Sigmoid colon (tissue), 7 donors: ENCODE measurements at regions of chr3 and their contacts with region 1.

Region 1: GRCh38 chr3:42839616-42840015 is 30.4 kb downstream of the ACKR2 start:
- DNase-seq: peak; percentile 73
- H3K4me3 ChIP-seq: peak overlapping the region in 1 of 4 donors; percentile 19
- H3K27ac ChIP-seq: no peak overlapping the region
- H3K4me1 ChIP-seq: peaks cover 0 to 14% (median 8%) of the 10 kb centered on the region in 4 donors
- H3K27me3 ChIP-seq: no peaks in the 10 kb centered on the region
- CTCF ChIP-seq: peak; percentile 81 to 93 (median 93)
- EP300 ChIP-seq: no peak
- POLR2A ChIP-seq: no peak

Region 2: DNA sequence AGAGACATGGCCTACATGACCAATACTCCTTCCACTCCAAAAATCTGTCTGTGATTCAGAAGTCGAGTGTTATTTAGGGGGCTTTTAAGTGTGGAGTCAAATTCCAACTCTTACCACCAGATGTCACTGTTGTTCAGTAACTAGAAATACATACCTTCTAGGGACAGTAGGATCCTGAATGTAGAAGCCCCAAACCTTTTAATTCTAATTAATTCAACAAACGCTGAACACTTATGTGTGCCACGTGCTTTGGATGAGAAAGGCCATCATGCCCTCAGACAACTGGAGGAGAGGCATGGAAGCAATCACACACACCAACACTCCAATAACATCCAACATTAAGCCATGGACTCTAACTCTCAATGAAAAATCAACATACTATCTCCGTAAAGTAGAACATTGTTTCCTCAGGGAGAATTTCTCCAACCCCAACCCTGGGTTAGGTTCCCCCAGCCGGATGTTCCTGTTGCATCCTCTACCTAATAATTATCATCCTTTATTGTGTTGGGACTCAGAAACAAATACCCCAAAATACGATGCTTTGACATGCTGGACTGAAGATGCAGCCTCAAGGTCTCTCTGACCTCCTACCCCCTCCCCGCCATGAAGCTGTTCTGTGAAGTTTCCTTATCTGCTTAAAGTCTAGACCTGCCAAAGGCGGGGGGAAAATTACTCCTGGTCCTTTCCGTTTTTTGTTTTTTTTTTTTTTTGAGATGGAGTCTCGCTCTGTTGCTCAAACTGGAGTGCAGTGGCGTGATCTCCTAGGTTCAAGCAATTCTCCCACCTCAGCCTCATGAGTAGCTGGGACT is 58.5 kb before region 1 on chr3:
- intact Hi-C with region 1: loop called (anchors 2 kb)
- DNase-seq: no peak
- H3K4me3 ChIP-seq: no peak overlapping the region
- H3K27ac ChIP-seq: peak overlapping the region in 3 of 4 donors; percentile 37 to 70 (median 45)
- H3K4me1 ChIP-seq: peaks cover 0 to 16% (median 0%) of the 10 kb centered on the region in 4 donors
- H3K27me3 ChIP-seq: no peaks in the 10 kb centered on the region
- CTCF ChIP-seq: peak; percentile 47 to 81 (median 78)
- EP300 ChIP-seq: no peak
- POLR2A ChIP-seq: no peak